Posterior vena cava (tissue), 2 donors: ENCODE measurements at regions of chr11 and their contacts with region 1.

Region 1: DNA sequence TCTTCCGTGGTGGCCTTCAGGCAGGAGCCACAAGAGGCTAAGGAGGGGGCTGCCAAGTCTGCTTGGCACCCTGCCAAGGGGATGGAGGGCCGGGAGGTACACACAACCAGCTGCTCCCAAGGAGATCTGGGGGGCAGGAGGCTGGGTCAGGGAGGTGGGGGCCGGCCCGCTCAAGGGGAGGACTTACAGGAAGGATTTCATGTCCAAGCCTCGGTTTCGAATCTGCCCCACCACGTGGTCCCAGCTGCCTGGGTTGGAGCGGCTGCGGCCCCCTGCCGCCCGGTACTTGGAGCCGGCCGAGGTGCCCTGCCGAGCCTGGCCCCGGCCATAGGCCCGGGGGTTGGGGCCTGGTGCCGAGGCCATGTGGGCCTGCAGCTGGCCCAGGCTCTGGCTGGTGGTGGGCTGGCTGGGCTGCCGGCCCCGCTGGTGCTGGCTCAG is 33.5 kb downstream of the LRRC10B start:
- DNase-seq: no peak

Region 2: GRCh38 chr11:61495801-61496597 is 46.0 kb before region 1 on chr11:
- intact Hi-C with region 1: no loop called
- DNase-seq: no peak

Region 3: DNA sequence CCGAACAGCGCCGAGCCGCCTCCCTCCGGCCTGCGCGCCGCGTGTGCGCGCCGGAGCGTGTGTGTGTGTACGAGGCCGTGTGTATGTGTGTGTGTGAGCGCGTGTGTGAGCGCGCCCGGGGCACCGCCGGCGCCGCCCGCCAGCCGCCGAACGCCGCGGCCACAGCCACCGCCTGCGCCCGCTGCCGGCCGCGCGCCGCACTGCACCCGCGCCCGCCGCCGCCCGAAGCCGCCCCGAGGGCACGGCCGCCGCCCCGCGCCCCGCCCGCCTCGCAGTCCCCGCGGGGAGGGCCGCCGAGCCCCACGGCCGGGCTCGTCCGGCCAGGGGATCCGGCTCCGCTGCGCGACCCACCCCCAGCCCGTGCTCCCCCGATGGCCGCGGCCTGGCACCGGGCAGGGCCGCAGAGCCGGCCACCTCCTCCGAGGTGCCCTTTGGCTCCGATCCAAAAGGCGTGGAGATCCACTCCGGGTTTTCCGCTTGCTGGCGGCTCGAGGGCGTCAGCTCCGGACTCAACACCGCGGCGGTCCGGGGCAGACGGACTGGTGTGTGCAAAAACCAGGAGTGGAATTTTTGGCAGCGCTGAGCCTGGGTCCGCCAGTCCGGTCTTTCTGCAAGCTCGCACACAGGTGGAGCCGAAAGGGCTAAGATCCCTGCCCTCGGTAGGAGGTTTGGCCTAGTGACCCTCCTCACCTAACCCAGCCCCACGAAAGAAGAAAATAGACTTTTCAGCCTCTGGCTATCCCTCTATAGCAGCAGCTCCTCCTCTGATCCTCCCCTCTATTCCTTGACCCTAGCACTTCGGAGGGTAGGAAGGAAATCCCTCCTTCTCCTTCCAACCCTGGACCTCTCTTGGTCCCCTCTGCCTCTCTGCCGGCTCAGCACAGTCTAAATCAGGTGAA is 39.2 kb after region 1 on chr11 and contains the start of gene SYT7:
- intact Hi-C with region 1: loop called in 1 of 2 experiments (anchors 1 kb)
- DNase-seq: peak; percentile 98
- total RNA-seq, gene SYT7: 0.71 to 0.93 TPM

Region 4: DNA sequence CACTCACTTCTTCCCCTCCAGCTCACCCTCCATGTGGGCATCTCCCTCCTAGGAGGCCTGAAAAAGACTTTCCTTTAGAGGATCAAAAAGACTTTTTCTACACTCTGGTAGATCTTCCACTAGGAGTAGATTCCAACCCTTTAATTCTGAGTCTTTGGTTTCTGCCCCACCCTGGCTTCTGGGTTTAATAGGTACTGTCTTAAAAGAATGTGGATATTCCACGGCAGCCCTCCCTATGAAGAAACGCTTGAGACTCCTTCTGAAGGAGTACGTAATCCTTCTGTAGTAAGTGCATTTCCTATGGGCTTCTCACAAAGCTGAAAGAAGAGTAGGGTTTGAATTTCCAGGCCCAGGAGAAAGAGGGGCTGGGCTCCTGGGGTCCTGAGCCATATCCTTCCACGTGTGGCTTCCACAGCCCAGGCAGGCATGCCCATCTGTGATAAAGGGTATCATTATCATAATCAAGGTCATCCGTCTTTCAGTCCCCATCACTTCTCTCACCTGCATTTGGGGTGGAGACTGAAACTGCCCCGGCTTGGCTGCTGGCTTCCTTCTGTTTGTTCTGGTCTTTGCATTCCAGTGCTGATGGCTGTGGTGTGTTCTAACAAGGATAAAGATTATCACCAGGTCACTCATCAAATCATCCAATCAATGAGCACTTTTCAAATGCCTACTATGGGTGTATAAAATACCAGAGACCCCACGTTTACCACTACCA is 949.3 kb after region 1 on chr11:
- intact Hi-C with region 1: loop called in 1 of 2 experiments (anchors 5 kb)
- DNase-seq: no peak